MCF 10A (cell line): ENCODE measurements at regions of chr15 and their contacts with region 1.

Region 1: GRCh38 chr15:74011610-74012009 is 17.1 kb downstream of the PML start:
- DNase-seq: peak; percentile 42
- H3K4me3 Mint-ChIP-seq: peak overlapping the region; percentile 18
- H3K27ac Mint-ChIP-seq: no peak overlapping the region
- H3K4me1 Mint-ChIP-seq: peaks cover 44% of the 10 kb centered on the region
- H3K27me3 Mint-ChIP-seq: no peaks in the 10 kb centered on the region
- CTCF ChIP-seq: no peak

Region 2: GRCh38 chr15:73727330-73727976 is 284.2 kb before region 1 on chr15:
- CTCF ChIA-PET with region 1: no interaction called
- POLR2A ChIA-PET with region 1: no interaction called
- intact Hi-C with region 1: no loop called
- DNase-seq: peak; percentile 8
- H3K4me3 Mint-ChIP-seq: no peak overlapping the region
- H3K27ac Mint-ChIP-seq: no peak overlapping the region
- H3K4me1 Mint-ChIP-seq: no peaks in the 10 kb centered on the region
- H3K27me3 Mint-ChIP-seq: no peaks in the 10 kb centered on the region
- CTCF ChIP-seq: no peak

Region 3: DNA sequence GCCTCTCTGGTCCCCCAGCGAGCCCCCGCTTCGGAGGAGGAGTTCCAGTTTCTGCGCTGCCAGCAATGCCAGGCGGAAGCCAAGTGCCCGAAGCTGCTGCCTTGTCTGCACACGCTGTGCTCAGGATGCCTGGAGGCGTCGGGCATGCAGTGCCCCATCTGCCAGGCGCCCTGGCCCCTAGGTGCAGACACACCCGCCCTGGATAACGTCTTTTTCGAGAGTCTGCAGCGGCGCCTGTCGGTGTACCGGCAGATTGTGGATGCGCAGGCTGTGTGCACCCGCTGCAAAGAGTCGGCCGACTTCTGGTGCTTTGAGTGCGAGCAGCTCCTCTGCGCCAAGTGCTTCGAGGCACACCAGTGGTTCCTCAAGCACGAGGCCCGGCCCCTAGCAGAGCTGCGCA is 13.6 kb before region 1 on chr15:
- CTCF ChIA-PET with region 1: interaction called, 5 read pairs
- POLR2A ChIA-PET with region 1: interaction called, 10 read pairs
- intact Hi-C with region 1: no loop called
- DNase-seq: peak; percentile 63
- H3K4me3 Mint-ChIP-seq: peak overlapping the region; percentile 81
- H3K27ac Mint-ChIP-seq: peak overlapping the region; percentile 77
- H3K4me1 Mint-ChIP-seq: peaks cover 40% of the 10 kb centered on the region
- H3K27me3 Mint-ChIP-seq: no peaks in the 10 kb centered on the region
- CTCF ChIP-seq: peak; percentile 49